Caco-2 (cell line): ENCODE measurements at regions of chr3 and their contacts with region 1.

Region 1: DNA sequence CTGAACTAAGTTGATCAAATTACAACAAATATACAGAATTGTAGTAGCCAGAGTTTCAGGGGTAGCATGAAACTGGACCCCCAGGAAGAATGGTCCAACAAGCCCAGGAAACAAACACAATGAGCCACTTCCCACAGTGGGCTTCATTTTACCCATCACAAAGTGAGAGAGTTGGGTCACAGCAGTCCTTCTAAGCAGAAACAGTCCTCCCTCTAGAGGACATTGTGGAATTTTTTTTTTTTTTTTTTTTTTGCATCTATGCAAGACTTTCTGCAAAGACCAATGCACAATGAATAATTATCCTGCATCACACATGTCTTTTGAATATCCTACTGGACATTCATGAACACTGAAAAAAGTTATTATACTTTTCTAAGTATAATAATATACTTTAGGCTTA is 73.8 kb upstream of the ATP13A5 start:
- DNase-seq: no peak
- H3K4me3 ChIP-seq: no peak overlapping the region
- H3K4me3 Mint-ChIP-seq: no peak overlapping the region
- H3K27ac Mint-ChIP-seq: no peak overlapping the region
- H3K4me1 ChIP-seq: no peaks in the 10 kb centered on the region
- H3K4me1 Mint-ChIP-seq: no peaks in the 10 kb centered on the region
- H3K27me3 ChIP-seq: no peaks in the 10 kb centered on the region
- H3K27me3 Mint-ChIP-seq: peaks cover 12% of the 10 kb centered on the region
- CTCF ChIP-seq: peak in 1 of 2 experiments; percentile 42

Region 2: GRCh38 chr3:193114431-193115340 is 337.7 kb before region 1 on chr3:
- CTCF ChIA-PET with region 1: no interaction called
- POLR2A ChIA-PET with region 1: no interaction called
- intact Hi-C with region 1: no loop called
- DNase-seq: no peak
- H3K4me3 ChIP-seq: no peak overlapping the region
- H3K4me3 Mint-ChIP-seq: no peak overlapping the region
- H3K27ac Mint-ChIP-seq: no peak overlapping the region
- H3K4me1 ChIP-seq: no peaks in the 10 kb centered on the region
- H3K4me1 Mint-ChIP-seq: no peaks in the 10 kb centered on the region
- H3K27me3 ChIP-seq: no peaks in the 10 kb centered on the region; the same call in 1 of the 2 replicates
- H3K27me3 Mint-ChIP-seq: peaks cover 23% of the 10 kb centered on the region
- CTCF ChIP-seq: no peak

Region 3: GRCh38 chr3:193190146-193190786 is 262.1 kb before region 1 on chr3:
- CTCF ChIA-PET with region 1: no interaction called
- POLR2A ChIA-PET with region 1: no interaction called
- intact Hi-C with region 1: loop called (anchors 5 kb)
- DNase-seq: peak in 1 of 2 experiments; percentile 29
- H3K4me3 ChIP-seq: no peak overlapping the region
- H3K4me3 Mint-ChIP-seq: no peak overlapping the region
- H3K27ac Mint-ChIP-seq: no peak overlapping the region
- H3K4me1 ChIP-seq: no peaks in the 10 kb centered on the region
- H3K4me1 Mint-ChIP-seq: no peaks in the 10 kb centered on the region
- H3K27me3 ChIP-seq: no peaks in the 10 kb centered on the region; the same call in 1 of the 2 replicates
- H3K27me3 Mint-ChIP-seq: peaks cover 28% of the 10 kb centered on the region
- CTCF ChIP-seq: peak; percentile 38 to 45

Region 4: DNA sequence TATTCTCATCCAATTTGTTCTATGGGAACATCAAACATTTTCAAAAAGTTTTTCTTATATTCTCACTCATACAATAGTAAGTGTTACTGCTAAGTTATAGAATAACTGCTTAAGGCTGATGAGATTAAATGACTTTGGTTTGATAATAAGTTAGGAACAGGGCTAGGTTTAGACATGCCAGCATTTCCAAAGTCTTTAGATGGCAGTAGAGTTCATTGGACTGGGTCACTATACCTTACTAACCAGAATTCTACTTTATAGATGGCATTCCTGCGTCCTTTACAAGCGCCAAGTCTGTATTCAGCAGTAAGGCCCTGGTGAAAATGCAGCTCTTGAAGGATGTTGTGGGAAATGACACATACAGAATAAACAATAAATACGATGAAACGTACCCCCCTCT is 189.6 kb before region 1 on chr3:
- CTCF ChIA-PET with region 1: no interaction called
- POLR2A ChIA-PET with region 1: no interaction called
- intact Hi-C with region 1: loop called (anchors 1 kb)
- DNase-seq: peak in 1 of 2 experiments; percentile 6
- H3K4me3 ChIP-seq: no peak overlapping the region
- H3K4me3 Mint-ChIP-seq: no peak overlapping the region
- H3K27ac Mint-ChIP-seq: no peak overlapping the region
- H3K4me1 ChIP-seq: no peaks in the 10 kb centered on the region
- H3K4me1 Mint-ChIP-seq: no peaks in the 10 kb centered on the region
- H3K27me3 ChIP-seq: no peaks in the 10 kb centered on the region
- H3K27me3 Mint-ChIP-seq: peaks cover 13% of the 10 kb centered on the region
- CTCF ChIP-seq: peak in 1 of 2 experiments; percentile 42

Region 5: DNA sequence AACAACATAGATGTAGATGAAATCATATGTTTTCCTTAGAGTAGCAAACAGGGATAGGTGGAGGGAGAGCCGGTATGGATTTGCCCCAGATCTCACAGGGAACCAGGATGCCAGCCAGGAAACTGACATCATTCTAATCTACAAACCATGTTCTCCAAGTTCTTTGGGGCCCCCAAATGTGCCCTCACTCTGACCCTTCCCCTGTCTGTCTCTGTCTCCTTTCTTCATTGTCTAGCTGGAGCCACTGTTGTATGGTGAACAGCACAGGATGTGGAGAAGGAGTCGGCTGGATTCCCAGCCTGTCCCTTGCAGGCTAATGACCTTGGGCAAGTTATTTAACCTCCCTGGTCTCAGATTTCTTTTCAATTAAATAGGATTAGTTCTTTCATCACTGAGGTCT is 74.7 kb before region 1 on chr3:
- CTCF ChIA-PET with region 1: no interaction called
- POLR2A ChIA-PET with region 1: no interaction called
- intact Hi-C with region 1: no loop called
- DNase-seq: no peak
- H3K4me3 ChIP-seq: no peak overlapping the region
- H3K4me3 Mint-ChIP-seq: no peak overlapping the region
- H3K27ac Mint-ChIP-seq: no peak overlapping the region
- H3K4me1 ChIP-seq: no peaks in the 10 kb centered on the region
- H3K4me1 Mint-ChIP-seq: peaks cover 6% of the 10 kb centered on the region
- H3K27me3 ChIP-seq: no peaks in the 10 kb centered on the region
- H3K27me3 Mint-ChIP-seq: peaks cover 7% of the 10 kb centered on the region
- CTCF ChIP-seq: no peak